Testis (tissue), 5 donors: ENCODE measurements at regions of chr6 and their contacts with region 1.

Region 1: GRCh38 chr6:163180874-163181541 is 233.5 kb upstream of the QKI start:
- DNase-seq: peak; percentile 93
- H3K4me3 ChIP-seq: no peak overlapping the region
- H3K27ac ChIP-seq: no peak overlapping the region
- H3K4me1 ChIP-seq: peaks cover 17% of the 10 kb centered on the region
- H3K27me3 ChIP-seq: no peaks in the 10 kb centered on the region
- CTCF ChIP-seq: peak; percentile 60 to 84 (median 80)
- POLR2A ChIP-seq: no peak

Region 2: DNA sequence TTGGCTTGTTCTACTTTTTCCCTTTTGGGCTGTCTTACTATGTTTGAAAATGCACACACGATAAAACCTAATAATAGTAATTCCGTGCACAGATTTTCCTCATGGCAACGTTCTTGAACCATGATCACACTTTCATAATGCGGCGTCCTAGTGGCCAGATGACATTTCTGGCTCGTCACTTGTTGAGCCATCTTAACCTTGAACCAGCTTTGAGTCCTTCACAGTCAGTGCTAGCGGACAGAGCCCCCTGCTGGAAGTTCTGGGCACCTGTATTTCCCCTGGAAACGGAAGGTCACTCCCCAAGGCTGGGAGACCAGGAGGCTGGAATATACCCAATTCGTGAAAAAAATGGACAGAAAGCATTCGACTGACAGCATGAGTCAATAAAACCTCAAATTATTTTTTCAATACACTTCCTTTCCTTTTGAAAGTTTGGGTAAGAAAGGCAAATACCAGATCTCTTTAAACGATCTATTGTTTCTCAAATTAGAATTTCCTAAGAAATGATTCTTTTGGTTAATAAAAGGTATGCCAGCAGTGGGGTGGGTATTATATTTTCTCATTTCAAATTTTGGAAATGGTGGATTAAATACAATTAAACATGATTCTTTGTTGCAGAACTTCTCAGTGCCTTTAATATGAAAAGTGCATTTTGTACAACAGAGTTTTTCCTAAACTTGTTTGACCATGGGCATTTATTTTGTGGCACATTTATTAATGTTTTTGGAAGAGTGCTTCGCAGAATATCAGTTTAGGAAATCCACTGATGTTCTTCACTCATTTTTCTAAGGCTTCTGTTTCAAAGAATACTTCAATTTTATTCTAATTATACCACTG is 775.8 kb after region 1 on chr6:
- intact Hi-C with region 1: loop called (anchors 10 kb)
- DNase-seq: peak; percentile 86
- H3K4me3 ChIP-seq: no peak overlapping the region
- H3K27ac ChIP-seq: no peak overlapping the region
- H3K4me1 ChIP-seq: peaks cover 11% of the 10 kb centered on the region
- H3K27me3 ChIP-seq: no peaks in the 10 kb centered on the region
- CTCF ChIP-seq: peak; percentile 87 to 92 (median 88)
- POLR2A ChIP-seq: no peak